Activated B cell treated with CpG ODN at 0.5 μM for 24 hours (primary cell): ENCODE measurements at regions of chr21 and their contacts with region 1.

Region 1: DNA sequence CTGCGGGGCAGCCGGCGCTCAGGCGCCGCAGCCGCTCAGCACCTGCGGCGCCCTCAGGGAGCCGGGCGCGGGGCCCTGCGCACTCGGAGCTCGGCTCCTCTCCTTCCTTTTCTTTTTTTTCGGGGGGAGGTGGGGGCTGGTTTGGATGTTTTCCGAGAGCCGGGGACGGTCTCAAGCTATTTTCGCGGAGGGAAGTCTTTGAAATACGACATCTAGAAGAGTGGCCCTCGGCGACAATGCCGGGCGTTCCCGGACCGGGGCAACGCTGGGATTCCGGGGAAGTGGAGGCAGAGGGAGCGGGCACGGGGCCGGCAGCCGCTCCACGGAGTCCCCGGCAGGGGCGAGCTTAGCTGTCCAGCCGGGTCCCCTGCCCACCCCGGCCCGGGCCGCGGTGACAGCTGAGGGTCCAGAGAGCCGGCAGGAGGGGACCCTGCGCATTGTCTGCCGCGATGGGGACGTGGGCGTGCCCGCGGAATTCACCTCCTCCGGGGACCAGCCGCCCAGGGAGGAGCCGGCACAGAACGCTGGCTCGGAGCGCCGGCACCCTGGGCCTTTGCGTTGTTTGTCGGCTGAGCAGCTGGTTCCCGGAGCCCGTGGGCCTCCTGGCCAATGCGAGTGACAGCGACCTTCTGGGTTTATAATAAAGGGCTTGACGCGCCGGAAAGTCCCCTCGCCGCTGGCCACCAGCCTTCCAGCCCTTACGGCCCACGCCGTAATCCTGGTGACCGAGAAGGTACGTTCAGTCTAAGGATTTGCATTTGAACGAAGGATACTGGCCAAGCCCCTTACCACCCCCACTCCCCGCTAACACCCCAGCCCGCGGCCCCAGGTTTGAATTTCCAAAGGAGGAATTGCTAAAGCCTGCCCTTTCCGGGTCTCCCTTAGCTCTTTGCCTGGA is 582 bp downstream of the SLC37A1 start:
- DNase-seq: peak; percentile 73
- ATAC-seq: peak; percentile 75
- H3K4me3 Mint-ChIP-seq: peak overlapping the region; percentile 84
- H3K27ac Mint-ChIP-seq: peak overlapping the region; percentile 87
- H3K4me1 Mint-ChIP-seq: peaks cover 43% of the 10 kb centered on the region
- H3K27me3 Mint-ChIP-seq: no peaks in the 10 kb centered on the region
- CTCF ChIP-seq: no peak

Region 2: GRCh38 chr21:42460391-42461204 is 53.6 kb before region 1 on chr21:
- CTCF ChIA-PET with region 1: no interaction called
- POLR2A ChIA-PET with region 1: interaction called, 5 read pairs
- intact Hi-C with region 1: loop called (anchors 1 kb)
- DNase-seq: peak; percentile 62
- ATAC-seq: peak; percentile 60
- H3K4me3 Mint-ChIP-seq: peak overlapping the region; percentile 78
- H3K27ac Mint-ChIP-seq: peak overlapping the region; percentile 98
- H3K4me1 Mint-ChIP-seq: peaks cover 65% of the 10 kb centered on the region
- H3K27me3 Mint-ChIP-seq: no peaks in the 10 kb centered on the region
- CTCF ChIP-seq: no peak

Region 3: DNA sequence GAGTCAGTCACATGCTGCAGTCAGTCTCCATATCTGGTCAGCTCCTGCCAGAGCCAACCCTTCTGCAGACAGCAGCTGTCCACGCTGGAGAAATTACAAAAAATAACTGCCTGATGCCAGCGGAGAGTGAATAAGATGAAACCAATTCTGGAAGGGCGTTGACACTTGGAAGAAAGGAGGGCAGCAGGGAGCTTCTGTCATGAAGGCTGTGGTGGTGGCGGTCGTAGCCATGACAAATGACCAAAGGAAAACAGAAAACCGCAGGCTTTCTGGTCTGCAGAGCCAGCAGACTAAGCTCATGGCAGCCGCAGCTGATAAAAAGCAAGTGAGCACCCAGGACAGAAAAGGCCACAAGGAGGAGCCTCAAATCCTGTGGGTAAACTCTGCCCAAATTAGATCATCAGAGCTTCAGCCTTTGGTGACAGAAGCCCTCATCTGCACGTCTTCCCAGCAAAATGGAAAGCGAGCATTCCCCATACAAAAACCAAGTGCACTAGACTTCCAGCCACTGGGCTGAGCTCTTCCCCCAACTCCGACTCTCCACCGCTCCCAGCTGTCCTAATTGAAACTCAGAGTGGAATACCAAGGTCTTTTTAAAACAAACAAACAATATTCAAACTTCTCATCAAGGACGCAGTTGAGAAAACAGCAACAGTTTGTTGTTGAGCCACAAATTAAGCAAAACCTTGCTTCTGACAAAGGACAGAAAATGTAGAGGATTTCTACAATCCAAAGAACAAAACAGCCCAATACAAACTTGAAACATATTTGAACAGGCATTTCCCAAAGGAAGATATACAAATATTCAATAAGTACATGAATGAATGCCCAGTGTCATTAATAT is 46.9 kb before region 1 on chr21:
- CTCF ChIA-PET with region 1: interaction called, 3 read pairs
- POLR2A ChIA-PET with region 1: interaction called, 5 read pairs
- intact Hi-C with region 1: loop called (anchors 1 kb)
- DNase-seq: peak; percentile 13
- ATAC-seq: no peak
- H3K4me3 Mint-ChIP-seq: peak overlapping the region; percentile 6
- H3K27ac Mint-ChIP-seq: no peak overlapping the region
- H3K4me1 Mint-ChIP-seq: peaks cover 69% of the 10 kb centered on the region
- H3K27me3 Mint-ChIP-seq: peaks cover 3% of the 10 kb centered on the region
- CTCF ChIP-seq: no peak